ENCODE measurements at regions of chr16 and their contacts with region 1.

Region 1: GRCh38 chr16:2500918-2501750 is 12.6 kb upstream of the ATP6V0C start:
- DNase-seq: peak in 1 of 2 donors; percentile 70
- ATAC-seq: peak; percentile 79 to 81
- H3K4me3 ChIP-seq: peak overlapping the region in 2 of 4 donors; percentile 9 to 32
- H3K27ac ChIP-seq: no peak overlapping the region
- H3K4me1 ChIP-seq: peaks cover 30 to 36% of the 10 kb centered on the region in 2 donors
- H3K27me3 ChIP-seq: no peaks in the 10 kb centered on the region
- CTCF ChIP-seq: peak; percentile 94 to 99 (median 97)
- POLR2A ChIP-seq: no peak

Region 2: DNA sequence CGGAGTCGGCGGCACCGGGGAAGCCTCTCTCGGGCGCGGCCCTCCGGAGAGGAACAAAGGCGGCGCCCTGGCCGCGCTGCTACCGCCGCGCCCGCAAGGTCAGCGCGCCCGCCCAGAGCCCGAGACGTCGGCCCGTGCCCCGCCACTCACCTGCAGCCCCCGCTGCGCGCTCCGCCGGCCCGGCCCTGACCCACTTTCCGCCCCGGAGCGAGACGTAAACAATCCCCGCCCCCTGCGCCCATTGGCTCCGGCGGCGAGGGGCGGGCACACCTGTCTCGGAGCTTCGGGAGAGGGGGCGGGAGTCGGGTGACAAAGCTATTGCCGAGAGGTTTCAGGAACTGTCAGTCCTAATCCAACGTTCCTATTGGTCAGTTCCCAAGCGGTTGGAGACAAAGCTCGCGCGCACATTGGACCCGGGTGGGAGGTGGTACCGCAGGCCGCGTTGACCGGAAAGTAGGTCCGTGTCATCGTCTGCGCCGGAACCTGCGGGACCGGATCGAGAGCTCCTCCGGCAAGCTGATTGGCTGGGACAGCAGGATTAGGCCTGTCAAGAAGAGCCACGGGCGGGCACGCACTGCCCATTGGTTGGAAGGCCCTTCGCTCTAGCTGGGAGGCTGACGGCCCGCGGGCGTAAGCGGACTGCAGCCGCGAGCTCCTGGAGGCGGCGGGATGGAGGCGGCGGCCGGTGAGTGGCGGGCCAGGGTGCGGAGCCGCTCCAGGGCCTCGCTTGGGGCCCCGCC is 718.6 kb before region 1 on chr16 and contains the starts of genes NUBP2 and SPSB3:
- in situ Hi-C with region 1: no loop called
- intact Hi-C with region 1: no loop called
- DNase-seq: peak; percentile 100
- ATAC-seq: peak; percentile 97 to 98
- H3K4me3 ChIP-seq: peak within 1 kb of the TSS; percentile 67 to 93 (median 78)
- H3K27ac ChIP-seq: peak within 1 kb of the TSS; percentile 77 to 92 (median 86)
- H3K4me1 ChIP-seq: peaks cover 30 to 38% of the 10 kb centered on the region in 2 donors
- H3K27me3 ChIP-seq: no peaks in the 10 kb centered on the region
- CTCF ChIP-seq: no peak
- POLR2A ChIP-seq: peak; percentile 76 to 93
- total RNA-seq, gene NUBP2: 77.3 to 163 (median 80.7) TPM
- total RNA-seq, gene SPSB3: 86.2 to 161 (median 88.3) TPM

Region 3: GRCh38 chr16:2194852-2195321 is 306.2 kb before region 1 on chr16:
- in situ Hi-C with region 1: no loop called
- intact Hi-C with region 1: loop called (anchors 5 kb)
- DNase-seq: peak; percentile 29 to 49
- ATAC-seq: peak; percentile 80 to 88
- H3K4me3 ChIP-seq: no peak overlapping the region
- H3K27ac ChIP-seq: no peak overlapping the region
- H3K4me1 ChIP-seq: peaks cover 7 to 10% of the 10 kb centered on the region in 2 donors
- H3K27me3 ChIP-seq: peaks cover 27 to 36% (median 33%) of the 10 kb centered on the region in 3 donors
- CTCF ChIP-seq: peak in 4 of 5 experiments; percentile 51 to 66 (median 58)
- POLR2A ChIP-seq: no peak

Region 4: DNA sequence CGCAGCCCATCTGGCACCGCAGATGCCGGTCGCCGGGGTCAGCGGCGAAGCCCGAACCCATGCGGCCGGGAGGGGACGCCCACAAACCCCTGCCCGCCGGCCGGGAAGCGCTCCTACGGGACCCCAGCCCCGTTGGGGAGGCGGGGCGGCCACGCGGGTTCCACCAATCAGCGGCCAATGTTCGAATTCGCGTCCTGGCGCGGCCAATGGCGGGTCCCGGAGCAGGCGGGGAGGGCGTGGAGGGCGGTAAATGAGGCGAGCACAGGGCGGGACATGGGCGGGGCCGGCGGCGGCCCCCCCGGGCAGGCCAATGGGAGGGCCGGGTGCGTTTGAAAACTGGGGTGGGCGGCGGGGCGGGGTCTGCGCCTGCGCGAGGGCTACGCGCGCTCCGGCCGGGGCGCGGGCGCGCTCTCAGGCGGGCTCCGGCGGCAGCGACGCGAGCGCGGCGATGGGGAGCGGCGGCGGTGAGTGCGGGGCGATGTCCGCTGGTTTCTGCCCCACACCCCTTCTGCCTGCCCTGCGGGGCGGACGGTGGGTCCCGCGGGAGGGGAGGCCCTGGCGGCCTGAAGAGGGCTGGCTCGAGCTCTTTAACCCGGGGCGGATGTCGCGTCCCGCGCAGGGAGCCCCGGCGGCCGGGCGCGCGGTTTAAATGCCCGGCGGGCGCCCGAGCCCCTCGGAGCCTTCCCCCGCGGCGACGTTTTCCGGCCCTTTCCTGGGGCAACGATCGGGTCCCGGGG is 71.9 kb before region 1 on chr16 and contains the start of gene CCNF:
- in situ Hi-C with region 1: no loop called
- intact Hi-C with region 1: loop called (anchors 5 kb)
- DNase-seq: peak; percentile 96 to 97
- ATAC-seq: peak; percentile 95 to 97
- H3K4me3 ChIP-seq: peak within 1 kb of the TSS; percentile 64 to 97 (median 87)
- H3K27ac ChIP-seq: peak within 1 kb of the TSS; percentile 73 to 78 (median 76)
- H3K4me1 ChIP-seq: peaks cover 6 to 8% of the 10 kb centered on the region in 2 donors
- H3K27me3 ChIP-seq: no peaks in the 10 kb centered on the region
- CTCF ChIP-seq: peak in 2 of 5 experiments; percentile 26 to 35
- POLR2A ChIP-seq: peak; percentile 51 to 52
- total RNA-seq, gene CCNF: 1.8 to 3.6 (median 2.4) TPM

Region 5: DNA sequence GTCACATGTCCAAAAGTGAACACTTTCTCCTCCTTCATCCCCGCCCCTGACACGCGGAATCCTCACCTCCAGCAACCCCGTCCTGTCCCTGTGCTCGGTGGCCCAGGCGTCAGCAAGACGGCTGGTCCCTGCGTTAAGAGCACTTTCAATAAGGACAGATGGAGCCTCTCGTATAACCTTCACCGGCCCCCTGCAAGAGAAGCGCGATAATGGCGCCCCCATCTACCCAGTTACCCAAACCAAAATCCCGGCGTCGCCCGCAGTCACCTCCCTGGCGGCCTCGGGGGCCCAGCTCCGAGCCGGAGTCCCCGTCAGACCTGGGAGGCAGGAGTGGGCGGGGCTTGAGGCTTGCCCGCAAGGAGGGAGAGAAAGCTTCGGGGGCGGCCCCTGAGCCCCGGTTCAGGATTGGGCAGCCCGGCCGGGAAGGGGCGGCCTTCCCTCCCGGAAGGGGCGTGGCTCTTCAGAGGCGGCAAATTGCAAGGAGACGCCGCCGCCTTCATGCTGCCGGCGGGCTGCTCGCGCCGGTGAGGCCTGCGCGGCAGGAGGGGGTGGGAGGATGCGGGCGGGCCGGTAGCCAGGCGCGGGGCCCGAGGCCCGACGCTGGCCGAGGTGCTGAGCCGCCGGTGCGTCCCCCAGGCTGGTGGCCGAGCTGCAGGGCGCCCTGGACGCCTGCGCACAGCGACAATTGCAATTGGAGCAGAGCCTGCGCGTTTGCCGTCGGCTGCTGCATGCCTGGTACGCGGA is 41.3 kb before region 1 on chr16 and contains the start of gene TEDC2:
- in situ Hi-C with region 1: no loop called
- intact Hi-C with region 1: loop called (anchors 5 kb)
- DNase-seq: peak; percentile 90 to 95
- ATAC-seq: peak; percentile 96 to 97
- H3K4me3 ChIP-seq: peak within 1 kb of the TSS; percentile 56 to 64 (median 60)
- H3K27ac ChIP-seq: peak within 1 kb of the TSS; percentile 53 to 73 (median 68)
- H3K4me1 ChIP-seq: peaks cover 4 to 13% of the 10 kb centered on the region in 2 donors
- H3K27me3 ChIP-seq: no peaks in the 10 kb centered on the region
- CTCF ChIP-seq: no peak
- POLR2A ChIP-seq: no peak
- total RNA-seq, gene TEDC2: 0.33 to 0.91 TPM in 2 of 4 donors, not detected in the others

Region 6: GRCh38 chr16:2474877-2475412 is 26.2 kb before region 1 on chr16 and contains the start of gene TBC1D24:
- in situ Hi-C with region 1: no loop called
- intact Hi-C with region 1: loop called (anchors 1 kb)
- DNase-seq: peak; percentile 63 to 84
- ATAC-seq: peak; percentile 83 to 90
- H3K4me3 ChIP-seq: peak within 1 kb of the TSS; percentile 66 to 87 (median 72)
- H3K27ac ChIP-seq: peak within 1 kb of the TSS; percentile 81 to 91 (median 86)
- H3K4me1 ChIP-seq: peaks cover 14 to 24% of the 10 kb centered on the region in 2 donors
- H3K27me3 ChIP-seq: peaks cover 30 to 32% (median 31%) of the 10 kb centered on the region in 3 donors
- CTCF ChIP-seq: no peak
- POLR2A ChIP-seq: peak; percentile 84 to 91
- total RNA-seq, gene TBC1D24: 8.7 to 14.8 (median 9.9) TPM

Measured in gastrocnemius medialis (tissue), 4 donors.